Sciatic nerve (tissue), 2 donors: ENCODE measurements at regions of chr12 and their contacts with region 1.

Region 1: DNA sequence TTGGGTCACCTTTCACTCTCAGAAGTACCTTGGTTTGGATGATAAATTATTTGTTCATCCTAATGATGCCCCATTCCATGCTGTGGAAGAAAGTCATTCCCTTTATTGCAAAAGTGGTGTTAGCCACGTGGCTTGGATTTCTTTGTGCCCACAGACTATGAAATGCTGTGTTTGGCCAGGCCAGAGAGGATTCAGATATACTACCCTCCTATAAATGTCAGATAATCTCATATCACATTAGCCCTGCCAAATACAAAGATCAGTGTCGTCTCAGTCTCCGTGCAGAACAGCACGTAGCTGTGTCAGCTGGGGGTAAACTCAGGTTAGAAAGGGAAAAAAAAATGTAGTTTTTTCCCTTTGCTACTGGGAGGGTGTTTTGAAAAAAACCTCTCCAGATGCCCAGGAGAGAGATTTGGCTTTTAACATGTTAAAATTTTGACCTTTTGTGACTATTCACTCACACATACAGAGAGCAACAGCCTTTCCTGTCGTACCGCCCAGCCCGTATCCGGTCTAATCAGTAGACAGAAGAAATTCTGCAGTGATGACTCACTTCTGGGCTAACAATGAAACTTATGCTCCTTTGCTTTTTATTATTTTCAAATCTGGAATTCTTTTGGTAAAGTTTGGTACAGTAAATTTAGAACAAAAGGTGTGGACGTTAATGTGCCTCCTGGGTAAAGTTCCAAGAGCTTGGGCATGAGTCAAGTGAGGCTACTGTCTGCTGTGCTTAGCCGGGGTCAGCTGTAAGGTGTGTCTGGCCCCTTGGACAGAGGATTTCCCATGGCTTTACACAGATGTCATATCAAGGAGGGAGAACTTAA is 8.5 kb upstream of the PTPRB start:
- DNase-seq: no peak
- ATAC-seq: peak; percentile 85

Region 2: GRCh38 chr12:69698769-69699540 is 946.8 kb before region 1 on chr12 and contains the start of gene BEST3:
- intact Hi-C with region 1: loop called (anchors 5 kb)
- DNase-seq: no peak
- ATAC-seq: no peak
- total RNA-seq, gene BEST3: not detected